Panc1 (cell line): ENCODE measurements at regions of chr19 and their contacts with region 1.

Region 1: DNA sequence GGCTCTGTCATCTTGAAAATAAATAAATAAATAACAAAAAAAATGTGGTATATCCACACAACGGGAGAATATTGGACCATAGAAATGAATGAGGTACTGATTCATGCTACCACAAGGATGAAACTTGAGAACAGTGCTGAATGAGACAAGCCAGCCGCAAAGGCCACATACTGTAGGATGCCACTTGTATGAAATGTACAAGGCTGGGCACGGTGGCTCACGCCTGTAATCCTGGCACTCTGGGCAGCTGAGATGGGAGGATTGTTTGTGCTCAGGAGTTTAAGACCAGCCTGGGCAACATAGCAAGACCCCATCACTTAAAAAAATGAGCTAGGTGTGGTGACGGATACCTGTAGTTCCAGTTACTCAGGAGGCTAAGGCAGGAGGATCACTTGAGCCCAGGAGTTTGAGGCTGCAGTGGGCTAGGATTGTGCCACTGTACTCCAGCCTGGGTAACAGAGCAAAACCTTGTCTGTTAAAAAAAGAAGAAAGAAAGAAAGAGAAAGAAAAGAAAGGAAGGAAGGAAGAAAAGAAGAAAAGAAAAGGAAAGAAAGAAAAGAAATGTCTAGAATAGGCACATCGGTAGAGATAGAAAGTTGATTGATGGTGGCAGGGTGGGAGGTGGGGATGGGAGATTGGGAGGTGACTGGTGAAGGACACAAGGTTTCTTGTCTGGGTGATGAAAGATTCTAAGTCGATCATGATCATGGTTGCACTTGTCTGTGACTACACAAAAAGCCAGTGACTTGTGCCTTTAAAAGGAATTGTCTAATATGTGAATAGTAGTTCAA is 20.3 kb downstream of the HPN start:
- DNase-seq: no peak
- ATAC-seq: no peak
- H3K4me3 ChIP-seq: no peak overlapping the region
- H3K27ac ChIP-seq: no peak overlapping the region
- H3K4me1 ChIP-seq: no peaks in the 10 kb centered on the region
- H3K27me3 ChIP-seq: no peaks in the 10 kb centered on the region
- CTCF ChIP-seq: no peak

Region 2: GRCh38 chr19:35031072-35031881 is 30.5 kb before region 1 on chr19:
- CTCF ChIA-PET with region 1: interaction called, 12 read pairs
- POLR2A ChIA-PET with region 1: no interaction called
- in situ Hi-C with region 1: no loop called
- intact Hi-C with region 1: no loop called
- DNase-seq: no peak
- ATAC-seq: peak; percentile 20
- H3K4me3 ChIP-seq: peak overlapping the region; percentile 37 to 42
- H3K27ac ChIP-seq: no peak overlapping the region
- H3K4me1 ChIP-seq: peaks cover 9% of the 10 kb centered on the region
- H3K27me3 ChIP-seq: peaks cover 3% of the 10 kb centered on the region; the same call in 1 of the 2 replicates
- CTCF ChIP-seq: no peak